ENCODE measurements at regions of chr16 and their contacts with region 1.

Region 1: DNA sequence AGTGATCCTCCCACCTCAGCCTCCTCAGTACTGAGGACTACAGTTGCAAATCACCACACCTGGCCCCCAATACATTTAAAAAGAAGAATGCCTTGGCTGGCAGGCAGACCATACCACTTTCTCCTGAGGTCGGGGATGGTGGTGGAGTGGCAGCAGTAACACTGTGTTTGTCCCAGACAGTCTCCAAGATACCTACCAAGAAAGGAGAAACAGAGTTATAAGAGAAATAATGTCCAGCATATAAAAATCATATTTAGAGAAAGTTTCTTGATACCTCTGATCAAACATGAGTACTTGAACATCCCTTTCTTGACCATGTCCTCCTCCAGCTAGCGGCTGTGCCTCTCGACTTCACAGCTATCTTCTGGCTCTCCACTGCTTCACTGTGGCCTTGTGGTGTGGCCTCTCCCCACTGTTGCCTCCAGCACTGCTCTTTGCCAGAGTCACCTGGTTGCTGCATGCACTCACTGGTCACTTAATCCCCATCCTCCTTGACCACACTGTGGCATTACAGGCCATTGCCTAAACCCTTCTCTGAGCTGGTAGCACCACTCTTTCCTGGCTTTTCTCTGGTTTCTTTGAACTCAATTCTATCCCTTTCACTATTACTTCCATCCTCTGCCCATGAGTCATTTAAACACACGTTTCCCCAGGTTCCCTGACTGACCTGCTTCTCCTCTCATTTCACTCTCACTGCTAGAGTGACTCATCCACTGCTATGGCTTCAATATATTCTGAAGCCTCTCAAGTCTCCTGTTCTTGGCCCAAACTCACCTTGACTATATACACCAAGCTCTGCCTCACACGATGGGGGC is 45.2 kb downstream of the XPO6 start:
- DNase-seq: peak; percentile 72 to 97
- H3K4me3 ChIP-seq: peak overlapping the region; percentile 19; the same call in 1 of the 2 replicates
- H3K27ac ChIP-seq: peak overlapping the region; percentile 86
- H3K4me1 ChIP-seq: peaks cover 53% of the 10 kb centered on the region
- H3K27me3 ChIP-seq: no peaks in the 10 kb centered on the region
- CTCF ChIP-seq: no peak

Region 2: DNA sequence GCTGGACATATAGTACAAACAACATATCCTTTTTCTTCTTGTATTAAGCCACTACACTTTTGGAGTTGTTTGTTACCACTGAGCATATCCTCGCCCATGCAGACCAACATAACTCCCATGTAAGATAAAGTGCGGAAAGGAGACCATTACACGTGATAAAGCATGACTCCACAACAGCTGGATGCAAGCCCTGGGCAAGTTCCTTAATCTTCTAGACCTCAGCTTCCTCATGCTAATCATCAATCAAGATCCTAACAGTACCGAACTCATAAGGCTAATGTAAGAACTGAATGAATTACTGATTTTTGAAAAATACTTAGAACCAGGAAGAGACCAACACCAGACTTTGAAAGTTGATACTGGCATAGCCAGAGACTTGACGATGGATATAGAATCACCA is 56.1 kb before region 1 on chr16:
- CTCF ChIA-PET with region 1: no interaction called
- POLR2A ChIA-PET with region 1: no interaction called
- intact Hi-C with region 1: loop called (anchors 5 kb)
- DNase-seq: no peak
- H3K4me3 ChIP-seq: no peak overlapping the region
- H3K27ac ChIP-seq: no peak overlapping the region
- H3K4me1 ChIP-seq: peaks cover 11% of the 10 kb centered on the region
- H3K27me3 ChIP-seq: no peaks in the 10 kb centered on the region
- CTCF ChIP-seq: no peak

Region 3: DNA sequence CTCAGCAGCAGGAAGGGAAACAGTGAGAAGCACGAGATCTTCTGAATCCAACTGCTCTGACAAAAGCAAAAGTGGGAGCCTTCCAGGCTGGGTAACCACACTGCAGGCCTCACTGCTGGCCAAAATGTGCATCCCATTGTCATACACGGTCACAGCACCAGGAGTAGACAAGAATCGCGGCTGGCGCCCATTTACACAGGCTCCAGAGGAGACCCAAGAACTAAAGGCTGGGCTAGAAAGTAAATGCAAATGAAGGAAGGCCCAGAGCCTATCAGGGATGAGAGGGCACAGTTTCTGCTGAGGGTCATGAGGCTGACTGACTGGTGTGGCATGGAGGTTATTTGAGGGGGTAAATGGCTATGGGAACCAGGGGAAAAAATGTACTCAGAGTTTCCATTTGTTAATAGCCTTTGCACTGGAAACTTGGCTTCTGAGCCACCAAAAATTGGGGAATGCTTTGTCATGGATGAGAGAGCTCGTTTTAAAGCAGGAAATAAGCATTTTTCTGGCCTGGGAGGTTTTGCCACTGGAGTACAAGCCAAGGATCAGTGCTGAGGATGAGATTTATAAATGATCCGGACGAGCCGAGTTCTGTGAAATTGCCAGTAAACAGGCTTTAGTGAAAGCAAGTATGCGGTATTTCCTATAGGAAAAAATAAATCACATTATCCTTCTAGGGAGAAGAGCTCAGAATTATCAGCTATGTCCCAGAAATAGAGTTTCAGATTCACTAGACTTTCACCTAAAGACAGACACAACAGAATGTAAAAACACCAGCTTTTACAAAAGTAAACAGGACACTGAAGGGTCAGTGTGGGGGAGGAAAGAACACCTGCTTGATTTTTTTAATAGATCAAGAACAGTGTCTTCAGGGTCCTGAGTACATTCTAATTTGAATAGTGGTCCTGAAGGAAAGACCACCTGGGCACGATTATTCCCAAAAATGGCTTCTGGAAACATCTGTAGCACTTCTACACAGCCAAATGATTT is 36.2 kb before region 1 on chr16:
- CTCF ChIA-PET with region 1: no interaction called
- POLR2A ChIA-PET with region 1: no interaction called
- intact Hi-C with region 1: loop called (anchors 5 kb)
- DNase-seq: no peak
- H3K4me3 ChIP-seq: no peak overlapping the region
- H3K27ac ChIP-seq: no peak overlapping the region
- H3K4me1 ChIP-seq: no peaks in the 10 kb centered on the region
- H3K27me3 ChIP-seq: no peaks in the 10 kb centered on the region
- CTCF ChIP-seq: no peak

Region 4: DNA sequence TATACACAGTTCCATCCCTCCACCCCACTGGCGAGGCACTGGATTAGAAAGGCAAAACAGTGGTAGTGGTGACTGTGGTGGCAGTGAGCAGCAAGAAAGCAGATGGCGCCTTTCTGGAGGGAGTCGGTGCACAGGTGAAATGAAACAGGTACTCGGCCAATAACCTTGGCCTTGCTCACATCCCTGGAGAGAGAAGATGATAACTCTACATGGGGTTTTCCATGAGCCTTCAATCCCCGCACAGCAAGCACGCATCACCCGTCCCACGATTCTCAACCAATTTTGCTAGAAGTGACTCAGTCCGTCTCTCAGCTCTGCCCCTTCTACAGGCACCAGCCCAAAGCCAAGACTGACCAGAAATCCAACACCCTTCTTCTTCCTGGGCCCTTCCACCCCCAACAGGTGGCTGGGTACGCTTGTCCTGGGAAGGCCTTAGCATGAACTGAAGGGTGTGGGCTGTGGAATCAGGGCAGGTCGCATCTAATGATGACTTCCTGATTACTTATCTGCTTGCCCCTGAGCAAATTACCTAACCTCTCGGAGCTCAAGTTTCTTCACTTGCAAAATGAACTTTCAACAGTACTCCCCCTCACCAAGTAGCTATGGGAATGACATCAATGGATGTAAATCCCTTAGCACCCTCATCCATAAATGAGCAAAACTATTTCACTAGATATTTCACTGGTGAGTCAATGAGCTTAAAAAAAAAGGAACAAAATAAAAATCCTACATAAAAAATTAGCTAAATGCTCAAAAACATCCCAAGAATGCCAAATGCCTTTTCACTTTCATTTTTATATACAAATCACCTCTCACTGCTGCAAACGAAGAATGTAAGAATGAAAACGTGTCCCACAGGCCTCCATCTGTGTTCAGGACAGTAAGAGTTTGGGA is 27.2 kb after region 1 on chr16:
- CTCF ChIA-PET with region 1: interaction called, 4 read pairs
- POLR2A ChIA-PET with region 1: no interaction called
- intact Hi-C with region 1: loop called (anchors 1 kb)
- DNase-seq: peak; percentile 84 to 98
- H3K4me3 ChIP-seq: no peak overlapping the region
- H3K27ac ChIP-seq: peak overlapping the region; percentile 75
- H3K4me1 ChIP-seq: peaks cover 73% of the 10 kb centered on the region
- H3K27me3 ChIP-seq: no peaks in the 10 kb centered on the region
- CTCF ChIP-seq: no peak

Region 5: DNA sequence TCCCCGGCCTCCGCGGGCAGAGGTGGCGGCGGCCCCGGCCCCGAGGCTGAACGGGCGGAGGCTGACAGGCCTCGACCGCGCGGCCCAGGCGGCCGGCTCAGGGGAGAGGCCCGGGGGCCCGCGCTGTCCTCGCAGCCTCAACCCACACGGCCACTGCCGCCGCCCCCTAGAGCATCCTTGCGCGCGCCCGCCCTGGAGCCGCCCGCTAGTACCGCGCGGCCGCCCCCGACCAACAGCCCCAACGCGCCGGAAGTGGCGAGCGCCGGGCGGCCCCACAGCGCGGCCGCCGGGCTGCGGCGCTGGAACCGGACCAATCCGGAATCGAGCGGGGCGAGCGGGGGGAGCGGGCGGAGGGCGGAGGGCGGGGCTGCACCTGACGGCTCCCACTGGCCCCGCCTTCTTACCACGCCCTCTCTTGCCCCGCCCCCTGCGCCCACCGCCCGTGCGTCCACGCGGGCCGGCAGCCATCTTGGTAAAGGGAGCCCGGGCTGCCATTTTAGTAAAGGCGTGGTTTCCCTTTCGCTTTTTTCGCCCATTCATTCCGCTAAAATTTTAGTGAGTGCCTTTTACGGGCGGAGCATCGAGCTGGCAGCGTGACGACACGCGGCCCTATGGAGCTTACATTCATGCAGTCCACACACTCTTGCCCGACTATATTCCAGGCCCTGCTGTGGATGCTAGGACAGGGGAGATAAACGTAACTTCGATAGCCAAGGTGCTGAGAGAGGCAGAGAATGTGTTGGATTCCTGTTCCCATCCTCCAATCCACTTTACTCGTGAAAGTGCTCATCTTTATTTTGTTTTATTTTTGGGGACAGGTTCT is 45.3 kb after region 1 on chr16 and contains the start of gene XPO6:
- CTCF ChIA-PET with region 1: interaction called, 3 read pairs
- POLR2A ChIA-PET with region 1: no interaction called
- intact Hi-C with region 1: loop called (anchors 1 kb)
- DNase-seq: peak; percentile 81 to 99
- H3K4me3 ChIP-seq: peak within 1 kb of the TSS; percentile 89
- H3K27ac ChIP-seq: peak within 1 kb of the TSS; percentile 32; the same call in 1 of the 2 replicates
- H3K4me1 ChIP-seq: peaks cover 25% of the 10 kb centered on the region
- H3K27me3 ChIP-seq: no peaks in the 10 kb centered on the region
- CTCF ChIP-seq: no peak
- total RNA-seq, gene XPO6: 154 and 221 TPM in 2 replicates

Region 6: DNA sequence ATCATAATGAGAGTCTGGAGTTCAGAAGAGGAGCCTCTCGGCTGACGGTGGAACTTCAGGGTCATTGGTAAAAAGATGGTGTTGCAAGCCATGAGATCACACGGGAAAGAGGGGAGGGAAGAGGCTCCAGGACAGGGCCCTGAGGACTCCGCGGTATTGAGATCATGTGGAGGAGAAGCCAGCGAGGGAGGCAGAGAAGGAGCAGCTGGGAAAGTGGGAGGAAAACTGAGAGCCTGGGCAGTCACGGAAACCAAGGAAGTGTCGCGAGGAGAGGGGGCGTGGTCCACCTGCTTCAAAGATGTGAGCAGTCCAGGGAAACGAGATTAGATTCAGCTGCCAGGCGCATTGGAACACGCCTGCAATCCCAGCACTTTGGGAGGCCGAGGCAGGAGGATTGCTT is 98.1 kb after region 1 on chr16:
- CTCF ChIA-PET with region 1: no interaction called
- POLR2A ChIA-PET with region 1: no interaction called
- intact Hi-C with region 1: loop called (anchors 5 kb)
- DNase-seq: peak; percentile 63 to 68
- H3K4me3 ChIP-seq: no peak overlapping the region; the same call in 1 of the 2 replicates
- H3K27ac ChIP-seq: no peak overlapping the region
- H3K4me1 ChIP-seq: peaks cover 6% of the 10 kb centered on the region; the same call in 1 of the 2 replicates
- H3K27me3 ChIP-seq: no peaks in the 10 kb centered on the region
- CTCF ChIP-seq: no peak